ENCODE measurements at regions of chr9 and their contacts with region 1.

Region 1: DNA sequence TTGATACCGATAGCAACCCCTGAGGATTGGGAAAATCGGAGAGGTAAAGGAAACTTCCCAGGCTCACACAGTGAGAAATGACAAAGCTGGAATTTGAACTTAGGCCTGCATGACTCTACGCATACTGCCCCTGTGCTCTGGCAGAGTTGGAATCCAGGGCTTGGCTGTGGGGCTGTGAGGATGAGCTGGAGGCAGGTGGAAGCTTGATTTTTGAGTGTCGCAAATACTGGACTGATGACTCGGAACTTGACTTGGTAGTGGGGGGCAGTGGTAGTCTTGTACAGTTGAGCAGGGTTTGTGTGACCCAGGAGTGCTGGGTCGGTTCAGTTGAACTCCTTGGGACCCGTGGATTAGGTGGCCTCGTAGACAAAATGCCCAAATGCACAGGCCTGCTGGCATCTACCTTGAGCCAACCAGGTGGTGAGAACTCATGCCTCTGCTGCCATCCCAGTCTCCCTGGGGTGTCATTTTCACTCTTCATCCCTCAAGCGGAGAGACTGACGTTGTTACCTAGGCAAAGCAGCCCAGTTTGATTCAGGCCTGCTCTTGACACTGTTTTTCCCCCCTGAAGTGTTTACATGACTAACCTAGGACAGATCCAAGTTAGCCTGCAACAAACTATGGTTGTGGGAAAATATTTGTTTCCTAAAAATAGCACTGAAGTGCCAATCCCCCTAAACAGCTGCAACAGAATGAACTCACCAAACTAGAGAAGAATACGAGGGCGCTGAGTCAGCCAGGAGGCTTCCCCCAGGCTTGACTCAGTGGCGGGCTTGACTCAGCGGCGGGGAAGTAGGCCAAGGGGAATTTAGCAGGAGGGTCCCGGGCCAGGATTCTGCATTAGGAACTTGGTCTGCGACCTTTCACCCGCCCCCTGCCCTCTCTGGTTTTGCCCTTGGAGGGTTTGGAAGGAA is 45.7 kb upstream of the ORM1 start:
- DNase-seq: peak; percentile 19 to 60
- H3K4me3 ChIP-seq: no peak overlapping the region
- H3K27ac ChIP-seq: peak overlapping the region; percentile 37; the same call in 1 of the 2 replicates
- H3K4me1 ChIP-seq: peaks cover 28% of the 10 kb centered on the region
- H3K27me3 ChIP-seq: no peaks in the 10 kb centered on the region
- CTCF ChIP-seq: no peak

Region 2: DNA sequence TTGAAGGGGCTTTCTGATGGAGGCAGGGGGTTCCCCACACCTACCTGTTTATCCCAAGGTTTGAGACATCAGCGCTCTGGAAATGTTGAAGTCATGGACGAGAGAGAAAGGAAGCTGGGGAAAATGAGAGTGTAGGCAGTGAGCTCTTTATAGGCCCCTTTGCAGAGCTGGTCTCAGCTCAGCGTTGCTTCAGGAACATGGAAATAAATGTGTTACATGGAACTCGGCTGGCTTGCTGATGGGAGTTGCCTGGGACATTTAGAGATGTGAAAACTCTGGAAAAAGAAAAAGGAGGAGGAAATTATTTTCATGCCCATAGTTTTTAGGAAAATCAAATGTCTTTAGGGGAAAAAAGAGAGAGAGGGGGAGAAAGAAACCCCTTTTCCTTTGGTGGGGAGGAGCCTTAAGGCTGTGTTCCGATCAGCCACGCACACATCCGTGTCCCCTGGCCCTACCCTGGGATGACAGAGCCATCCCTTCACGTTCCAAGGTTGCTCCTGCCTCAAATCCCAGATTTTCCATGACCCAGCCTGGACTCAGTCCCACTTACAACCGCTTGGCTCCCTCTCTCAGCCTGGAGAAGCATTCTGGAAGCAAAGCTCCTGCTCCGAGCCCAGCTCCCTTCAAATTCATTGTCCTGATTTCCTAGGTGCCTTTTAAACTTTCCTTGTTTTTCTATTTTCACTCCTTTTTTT is 43.5 kb before region 1 on chr9:
- CTCF ChIA-PET with region 1: no interaction called
- POLR2A ChIA-PET with region 1: no interaction called
- intact Hi-C with region 1: loop called (anchors 5 kb)
- DNase-seq: no peak
- H3K4me3 ChIP-seq: no peak overlapping the region
- H3K27ac ChIP-seq: no peak overlapping the region
- H3K4me1 ChIP-seq: 0 out of 2 replicates have a peak, but pooled peaks cover 4% of the 10 kb centered on the region
- H3K27me3 ChIP-seq: peaks cover 6% of the 10 kb centered on the region; the same call in 1 of the 2 replicates
- CTCF ChIP-seq: no peak

Region 3: GRCh38 chr9:114339130-114339908 is 62.2 kb after region 1 on chr9:
- CTCF ChIA-PET with region 1: no interaction called
- POLR2A ChIA-PET with region 1: no interaction called
- intact Hi-C with region 1: no loop called
- DNase-seq: peak in 1 of 2 experiments; percentile 57
- H3K4me3 ChIP-seq: no peak overlapping the region
- H3K27ac ChIP-seq: no peak overlapping the region
- H3K4me1 ChIP-seq: no peaks in the 10 kb centered on the region
- H3K27me3 ChIP-seq: no peaks in the 10 kb centered on the region
- CTCF ChIP-seq: peak; percentile 90

Region 4: GRCh38 chr9:114446036-114446435 is 168.9 kb after region 1 on chr9:
- CTCF ChIA-PET with region 1: no interaction called
- POLR2A ChIA-PET with region 1: no interaction called
- intact Hi-C with region 1: no loop called
- DNase-seq: peak in 1 of 2 experiments; percentile 52
- H3K4me3 ChIP-seq: no peak overlapping the region
- H3K27ac ChIP-seq: no peak overlapping the region
- H3K4me1 ChIP-seq: 0 out of 2 replicates have a peak, but pooled peaks cover 9% of the 10 kb centered on the region
- H3K27me3 ChIP-seq: no peaks in the 10 kb centered on the region
- CTCF ChIP-seq: no peak

Measured in PC-9 (cell line).